Caco-2 (cell line): ENCODE measurements at regions of chr14 and their contacts with region 1.

Region 1: GRCh38 chr14:103562429-103563225 is at the starts of genes BAG5 and COA8:
- DNase-seq: peak; percentile 89 to 91
- H3K4me3 ChIP-seq: peak within 1 kb of the TSS; percentile 96
- H3K4me3 Mint-ChIP-seq: peak within 1 kb of the TSS; percentile 99
- H3K27ac Mint-ChIP-seq: peak within 1 kb of the TSS; percentile 93
- H3K4me1 ChIP-seq: peaks cover 4% of the 10 kb centered on the region; the same call in 1 of the 2 replicates
- H3K4me1 Mint-ChIP-seq: no peaks in the 10 kb centered on the region
- H3K27me3 ChIP-seq: no peaks in the 10 kb centered on the region
- H3K27me3 Mint-ChIP-seq: no peaks in the 10 kb centered on the region
- CTCF ChIP-seq: no peak
- total RNA-seq, gene BAG5: 28.9 and 31.6 TPM in 2 replicates
- total RNA-seq, gene COA8: 40.6 and 50.7 TPM in 2 replicates

Region 2: DNA sequence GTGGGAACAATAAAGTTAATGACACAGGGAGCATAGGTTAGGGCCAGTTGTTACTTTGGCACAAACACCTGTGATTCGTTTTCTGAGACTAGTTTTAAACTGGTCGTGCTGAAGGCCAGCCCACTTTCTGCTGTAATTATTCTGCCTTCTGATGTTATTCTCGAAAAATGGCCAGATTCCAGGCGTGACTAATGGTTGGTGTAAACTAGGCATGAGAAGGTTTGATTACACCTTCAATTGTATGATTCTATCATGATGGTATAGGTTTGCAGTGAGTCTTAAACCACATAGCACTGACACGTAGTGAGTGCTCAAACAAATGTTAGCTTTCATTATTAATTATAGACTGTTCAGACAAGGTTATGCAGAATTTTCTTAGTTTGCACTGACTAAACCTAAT is 79.0 kb before region 1 on chr14:
- CTCF ChIA-PET with region 1: no interaction called
- POLR2A ChIA-PET with region 1: no interaction called
- intact Hi-C with region 1: no loop called
- DNase-seq: no peak
- H3K4me3 ChIP-seq: no peak overlapping the region
- H3K4me3 Mint-ChIP-seq: no peak overlapping the region
- H3K27ac Mint-ChIP-seq: no peak overlapping the region
- H3K4me1 ChIP-seq: no peaks in the 10 kb centered on the region
- H3K4me1 Mint-ChIP-seq: no peaks in the 10 kb centered on the region
- H3K27me3 ChIP-seq: no peaks in the 10 kb centered on the region
- H3K27me3 Mint-ChIP-seq: no peaks in the 10 kb centered on the region
- CTCF ChIP-seq: no peak

Region 3: DNA sequence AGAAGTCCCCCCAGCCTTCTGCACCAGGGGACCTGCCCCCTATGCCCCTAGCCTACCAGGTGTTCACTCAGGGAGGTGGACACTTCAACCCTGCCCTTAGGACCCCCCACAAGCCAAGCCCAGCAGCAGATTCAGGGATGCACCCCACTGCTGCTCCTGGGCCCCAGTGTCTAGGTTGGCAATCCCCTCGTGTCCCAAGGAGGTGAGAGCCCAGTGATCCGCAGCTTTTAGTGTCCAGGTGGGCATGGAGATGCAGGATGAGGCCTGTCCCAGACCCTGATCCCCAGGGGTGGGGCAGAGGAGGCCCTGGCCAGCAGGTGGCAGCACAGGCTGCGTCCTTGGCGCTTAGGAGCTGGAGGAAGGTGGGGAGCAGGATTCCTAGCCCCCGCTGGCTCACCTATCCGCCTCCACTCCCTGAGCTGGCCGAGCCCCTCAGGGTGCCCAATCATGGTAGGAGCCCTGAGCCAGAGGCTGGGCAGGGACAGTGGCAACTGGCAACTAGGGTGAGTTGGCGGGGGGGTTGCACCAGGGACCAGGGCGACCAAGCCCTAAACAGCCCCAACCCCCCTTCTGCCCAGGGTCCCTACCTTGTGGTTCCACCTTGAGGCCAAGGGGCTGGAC is 44.1 kb before region 1 on chr14:
- CTCF ChIA-PET with region 1: interaction called, 12 read pairs
- POLR2A ChIA-PET with region 1: interaction called, 10 read pairs
- intact Hi-C with region 1: no loop called
- DNase-seq: peak; percentile 78 to 83
- H3K4me3 ChIP-seq: peak overlapping the region; percentile 95
- H3K4me3 Mint-ChIP-seq: peak overlapping the region; percentile 74
- H3K27ac Mint-ChIP-seq: peak overlapping the region; percentile 40
- H3K4me1 ChIP-seq: peaks cover 19% of the 10 kb centered on the region
- H3K4me1 Mint-ChIP-seq: peaks cover 7% of the 10 kb centered on the region
- H3K27me3 ChIP-seq: no peaks in the 10 kb centered on the region
- H3K27me3 Mint-ChIP-seq: no peaks in the 10 kb centered on the region
- CTCF ChIP-seq: peak; percentile 93 to 94

Region 4: GRCh38 chr14:103528587-103529382 is 33.8 kb before region 1 on chr14 and contains the start of gene TRMT61A:
- CTCF ChIA-PET with region 1: no interaction called
- POLR2A ChIA-PET with region 1: interaction called, 10 read pairs
- intact Hi-C with region 1: no loop called
- DNase-seq: peak; percentile 88 to 93
- H3K4me3 ChIP-seq: peak within 1 kb of the TSS; percentile 85
- H3K4me3 Mint-ChIP-seq: peak within 1 kb of the TSS; percentile 81
- H3K27ac Mint-ChIP-seq: peak within 1 kb of the TSS; percentile 85
- H3K4me1 ChIP-seq: peaks cover 51% of the 10 kb centered on the region
- H3K4me1 Mint-ChIP-seq: peaks cover 35% of the 10 kb centered on the region
- H3K27me3 ChIP-seq: no peaks in the 10 kb centered on the region
- H3K27me3 Mint-ChIP-seq: no peaks in the 10 kb centered on the region
- CTCF ChIP-seq: no peak
- total RNA-seq, gene TRMT61A: 20.8 and 22.3 TPM in 2 replicates

Region 5: DNA sequence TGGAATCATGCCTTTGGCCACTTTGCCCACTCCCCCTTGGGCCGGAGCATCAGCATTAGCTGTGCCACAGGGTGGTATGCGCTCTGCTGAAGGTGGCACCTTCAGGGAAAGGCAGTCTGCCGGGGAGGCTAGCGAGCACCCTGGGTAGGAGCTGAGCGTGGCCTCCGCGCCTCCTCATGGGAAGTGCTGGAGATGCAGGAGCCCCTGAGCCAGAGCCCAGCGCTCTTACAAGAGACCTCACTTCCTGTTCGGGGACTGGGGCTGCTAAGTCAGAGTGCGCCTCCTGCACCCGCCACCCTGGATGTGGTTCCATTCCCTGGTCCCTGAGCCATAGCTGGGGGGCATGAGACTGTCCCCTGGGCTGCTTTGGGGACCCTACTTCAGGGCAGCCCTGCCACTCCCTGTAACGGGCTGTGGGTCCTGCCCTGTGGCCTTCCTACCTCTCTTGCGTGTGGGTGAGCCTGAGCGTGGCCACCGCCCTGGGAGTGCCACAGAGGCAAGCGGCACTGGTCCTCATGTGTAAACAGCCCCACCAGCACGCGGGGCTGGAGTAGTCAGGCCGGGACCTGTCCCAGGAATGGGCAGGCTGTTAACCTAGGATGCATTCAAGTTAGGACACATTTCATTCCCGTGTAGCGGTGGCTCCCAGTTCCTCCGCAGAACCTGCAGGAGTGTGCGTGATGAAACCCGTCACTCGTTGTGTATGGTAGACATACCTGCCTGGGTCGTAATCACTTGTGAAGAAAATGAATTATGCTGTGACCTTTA is 19.5 kb after region 1 on chr14:
- CTCF ChIA-PET with region 1: no interaction called
- POLR2A ChIA-PET with region 1: interaction called, 11 read pairs
- intact Hi-C with region 1: no loop called
- DNase-seq: no peak
- H3K4me3 ChIP-seq: no peak overlapping the region
- H3K4me3 Mint-ChIP-seq: no peak overlapping the region
- H3K27ac Mint-ChIP-seq: no peak overlapping the region
- H3K4me1 ChIP-seq: no peaks in the 10 kb centered on the region
- H3K4me1 Mint-ChIP-seq: no peaks in the 10 kb centered on the region
- H3K27me3 ChIP-seq: no peaks in the 10 kb centered on the region
- H3K27me3 Mint-ChIP-seq: no peaks in the 10 kb centered on the region
- CTCF ChIP-seq: no peak

Region 6: GRCh38 chr14:103628684-103629502 is 66.3 kb after region 1 on chr14 and contains the start of gene KLC1:
- CTCF ChIA-PET with region 1: no interaction called
- POLR2A ChIA-PET with region 1: interaction called, 3 read pairs
- intact Hi-C with region 1: loop called (anchors 10 kb)
- DNase-seq: peak; percentile 68 to 88
- H3K4me3 ChIP-seq: peak within 1 kb of the TSS; percentile 98
- H3K4me3 Mint-ChIP-seq: peak within 1 kb of the TSS; percentile 85
- H3K27ac Mint-ChIP-seq: peak within 1 kb of the TSS; percentile 94
- H3K4me1 ChIP-seq: peaks cover 24% of the 10 kb centered on the region
- H3K4me1 Mint-ChIP-seq: peaks cover 7% of the 10 kb centered on the region
- H3K27me3 ChIP-seq: no peaks in the 10 kb centered on the region
- H3K27me3 Mint-ChIP-seq: no peaks in the 10 kb centered on the region
- CTCF ChIP-seq: no peak
- total RNA-seq, gene KLC1: 108 and 110 TPM in 2 replicates